Posterior vena cava (tissue), 2 donors: ENCODE measurements at regions of chr12 and their contacts with region 1.

Region 1: GRCh38 chr12:19507823-19508222 is 68.5 kb downstream of the AEBP2 start:
- DNase-seq: no peak

Region 2: GRCh38 chr12:19462406-19462805 is 45.4 kb before region 1 on chr12:
- intact Hi-C with region 1: loop called in 1 of 2 experiments (anchors 1 kb)
- DNase-seq: no peak